Common myeloid progenitor, CD34-positive (primary cell): ENCODE measurements at regions of chr5 and their contacts with region 1.

Region 1: DNA sequence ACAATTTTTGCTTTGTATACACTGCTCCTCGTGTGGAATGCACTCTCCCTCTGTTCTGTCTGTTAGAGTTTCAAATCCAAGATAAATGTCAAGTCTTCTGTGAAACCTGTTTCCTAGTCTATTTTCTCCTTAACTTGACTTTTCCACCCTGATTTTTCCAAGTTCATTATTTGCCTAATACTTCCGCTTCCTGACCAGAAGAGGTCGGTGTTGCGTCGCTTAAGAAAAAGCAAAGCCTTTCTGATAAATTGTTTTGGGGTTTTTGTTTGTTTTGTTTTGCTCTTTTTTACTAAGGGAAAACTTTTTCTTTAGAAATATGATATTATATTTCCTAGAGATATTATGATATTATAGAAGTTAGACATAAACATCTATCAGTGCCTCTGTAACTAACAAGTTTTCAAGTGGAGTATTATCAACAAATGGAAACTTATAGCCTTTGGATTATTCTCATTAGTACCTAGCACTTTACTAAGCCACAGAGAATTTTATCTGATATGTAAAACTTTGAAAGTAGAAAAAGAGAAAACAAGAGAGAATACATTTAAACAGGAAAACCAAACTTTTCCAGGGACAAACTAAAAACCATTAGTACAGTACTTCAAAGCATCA is 55.8 kb downstream of the PHAX start:
- DNase-seq: peak; percentile 56 to 72 (median 68)
- H3K4me3 ChIP-seq: no peak overlapping the region
- H3K27ac ChIP-seq: no peak overlapping the region
- H3K4me1 ChIP-seq: peaks cover 0 to 4% (median 0%) of the 10 kb centered on the region in 4 experiments
- H3K27me3 ChIP-seq: no peaks in the 10 kb centered on the region

Region 2: GRCh38 chr5:126615286-126615685 is 41.2 kb before region 1 on chr5:
- CTCF ChIA-PET with region 1: no interaction called
- POLR2A ChIA-PET with region 1: no interaction called
- DNase-seq: no peak
- H3K4me3 ChIP-seq: no peak overlapping the region
- H3K27ac ChIP-seq: no peak overlapping the region
- H3K4me1 ChIP-seq: no peaks in the 10 kb centered on the region
- H3K27me3 ChIP-seq: no peaks in the 10 kb centered on the region

Region 3: DNA sequence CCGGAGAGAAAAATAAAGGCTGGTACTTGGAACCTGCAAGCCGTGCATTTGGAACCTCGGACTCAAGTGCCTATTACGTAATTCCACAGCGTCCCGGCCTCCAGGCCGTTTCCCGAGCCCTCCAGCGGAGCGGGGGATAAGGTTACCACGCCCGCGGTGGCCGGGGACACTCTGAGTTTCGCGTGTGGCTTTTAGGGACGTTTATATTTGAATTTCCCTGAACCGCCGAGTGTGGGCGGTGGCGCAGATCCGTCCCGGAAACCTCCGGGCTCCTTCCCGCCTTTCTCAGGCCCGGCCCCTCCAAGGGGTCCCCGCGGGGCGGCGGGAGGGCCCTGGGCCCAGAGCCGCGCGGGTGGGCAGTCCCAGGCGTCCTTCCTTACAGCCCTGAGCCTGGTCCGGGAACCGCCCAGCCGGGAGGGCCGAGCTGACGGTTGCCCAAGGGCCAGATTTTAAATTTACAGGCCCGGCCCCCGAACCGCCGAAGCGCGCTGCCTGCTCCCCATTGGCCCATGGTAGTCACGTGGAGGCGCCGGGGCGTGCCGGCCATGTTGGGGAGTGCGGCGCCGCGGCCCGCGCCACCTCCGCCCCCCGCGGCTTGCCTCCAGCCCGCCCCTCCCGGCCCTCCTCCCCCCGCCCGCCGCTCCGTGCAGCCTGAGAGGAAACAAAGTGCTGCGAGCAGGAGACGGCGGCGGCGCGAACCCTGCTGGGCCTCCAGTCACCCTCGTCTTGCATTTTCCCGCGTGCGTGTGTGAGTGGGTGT is 120.2 kb after region 1 on chr5 and contains the start of gene LMNB1:
- CTCF ChIA-PET with region 1: interaction called, 17 read pairs
- POLR2A ChIA-PET with region 1: no interaction called
- DNase-seq: peak; percentile 92 to 97 (median 96)
- H3K4me3 ChIP-seq: peak within 1 kb of the TSS; percentile 66 to 98 (median 95)
- H3K27ac ChIP-seq: peak within 1 kb of the TSS; percentile 46 to 86
- H3K4me1 ChIP-seq: peaks cover 11 to 39% (median 19%) of the 10 kb centered on the region in 4 experiments
- H3K27me3 ChIP-seq: no peaks in the 10 kb centered on the region

Region 4: GRCh38 chr5:126801992-126802294 is 145.4 kb after region 1 on chr5:
- CTCF ChIA-PET with region 1: interaction called, 15 read pairs
- POLR2A ChIA-PET with region 1: no interaction called
- DNase-seq: peak; percentile 69 to 84 (median 80)
- H3K4me3 ChIP-seq: no peak overlapping the region
- H3K27ac ChIP-seq: no peak overlapping the region
- H3K4me1 ChIP-seq: peaks cover under 1 to 29% (median 17%) of the 10 kb centered on the region in 4 experiments
- H3K27me3 ChIP-seq: no peaks in the 10 kb centered on the region

Region 5: DNA sequence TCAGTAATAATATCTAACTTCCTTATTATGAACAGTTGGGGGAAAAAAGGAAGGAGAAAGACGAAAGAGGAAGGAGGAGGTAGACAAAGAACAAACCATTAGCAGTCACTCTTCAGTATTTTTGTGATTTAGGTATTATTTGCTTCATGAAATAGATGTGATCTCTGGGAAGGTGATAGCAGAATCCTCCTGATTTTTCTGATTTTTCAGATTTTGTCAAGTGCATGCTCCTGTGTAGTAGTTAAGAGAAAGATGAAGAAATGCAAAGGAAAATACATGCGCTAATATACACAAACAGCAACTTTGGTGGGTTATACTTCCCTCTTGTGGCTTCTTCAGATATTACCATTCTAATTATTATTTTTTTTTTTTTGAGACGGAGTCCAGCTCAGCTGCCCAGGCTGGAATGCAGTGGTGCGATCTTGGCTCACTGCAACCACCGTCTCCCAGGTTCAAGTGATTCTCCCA is 152.1 kb after region 1 on chr5:
- CTCF ChIA-PET with region 1: interaction called, 10 read pairs
- POLR2A ChIA-PET with region 1: no interaction called
- DNase-seq: peak; percentile 54 to 74 (median 63)
- H3K4me3 ChIP-seq: peak overlapping the region in 4 of 7 experiments; percentile 17 to 45 (median 30)
- H3K27ac ChIP-seq: no peak overlapping the region
- H3K4me1 ChIP-seq: peaks cover 8 to 63% (median 33%) of the 10 kb centered on the region in 4 experiments
- H3K27me3 ChIP-seq: no peaks in the 10 kb centered on the region